ENCODE measurements at regions of chr2 and their contacts with region 1.

Region 1: DNA sequence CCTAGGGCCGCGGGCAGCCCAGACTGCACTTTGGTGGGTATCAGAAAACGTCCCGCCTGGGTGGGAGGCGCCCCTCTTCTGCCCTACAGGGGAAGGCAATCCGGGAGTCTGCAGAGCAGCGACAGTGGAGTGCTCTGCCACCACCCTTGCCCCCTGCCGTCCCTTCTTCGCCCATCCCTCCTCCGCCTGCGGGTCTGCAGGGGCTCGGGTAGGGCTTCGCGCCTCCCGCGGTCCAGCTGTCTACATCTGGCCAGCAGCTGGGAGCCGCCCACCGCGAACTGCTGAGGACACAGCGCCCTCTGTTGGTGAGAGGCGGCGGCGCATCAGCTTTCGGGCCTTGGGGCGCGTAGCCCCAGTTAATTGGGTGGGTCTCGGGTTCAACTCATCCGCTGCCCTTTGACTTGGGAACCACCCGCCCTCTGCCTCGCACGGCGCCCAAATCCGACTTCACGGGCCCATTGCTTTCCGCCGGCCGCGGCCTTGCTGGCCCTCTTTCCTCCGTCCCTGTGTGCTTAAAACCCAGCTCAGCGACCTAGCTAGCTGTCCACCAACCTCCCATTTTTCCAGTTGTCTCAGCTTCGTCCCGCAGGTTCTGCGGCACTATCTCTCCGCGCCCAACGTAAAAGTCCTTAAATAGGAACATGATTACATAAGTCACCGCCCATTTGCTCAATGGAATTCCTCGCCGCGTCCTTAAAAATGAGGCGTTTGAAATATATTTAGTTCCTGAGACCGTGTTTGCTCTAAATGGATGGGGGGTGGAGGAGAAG is 17.6 kb downstream of the WNT10A start:
- DNase-seq: peak; percentile 86
- ATAC-seq: peak; percentile 72

Region 2: DNA sequence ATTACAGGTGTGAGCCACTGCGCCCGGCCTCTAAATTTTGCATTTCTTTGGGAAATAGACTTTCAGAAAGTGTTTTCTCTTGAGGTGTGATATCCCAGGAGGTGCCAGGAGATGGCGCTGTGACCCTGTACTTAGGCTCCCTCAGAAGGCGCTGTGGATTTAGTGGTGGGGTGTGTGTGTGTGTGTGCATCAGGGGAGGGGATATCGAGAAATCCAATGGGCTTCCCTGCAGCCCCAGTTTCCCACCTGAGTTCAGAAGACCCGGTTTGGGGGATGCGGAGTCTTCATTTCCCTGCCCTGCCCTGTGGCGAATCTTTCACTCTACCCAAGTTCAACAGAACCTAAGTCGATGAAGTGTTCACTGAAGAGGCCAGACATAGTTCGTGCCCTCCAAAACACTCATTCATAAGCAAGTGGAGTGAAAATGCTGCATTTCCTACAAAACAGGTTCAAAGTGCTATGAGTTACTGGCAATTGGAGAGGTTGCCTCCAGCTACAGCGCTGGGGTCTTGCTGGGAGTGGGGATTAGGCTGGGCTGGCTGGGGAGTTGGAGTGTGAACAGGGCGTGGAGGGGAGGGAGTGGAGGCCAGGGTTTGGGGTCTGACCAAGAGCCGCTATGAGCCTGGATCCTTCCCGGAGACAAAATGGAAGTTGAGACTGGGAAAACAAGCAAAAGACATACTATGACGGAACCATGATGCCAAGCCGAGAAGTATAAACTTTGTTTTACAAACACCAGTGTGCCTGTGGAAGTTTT is 45.2 kb before region 1 on chr2:
- intact Hi-C with region 1: loop called (anchors 5 kb)
- DNase-seq: peak; percentile 76
- ATAC-seq: peak; percentile 51

Region 3: GRCh38 chr2:218876562-218877219 is 21.6 kb before region 1 on chr2:
- intact Hi-C with region 1: loop called (anchors 2 kb)
- DNase-seq: peak; percentile 62
- ATAC-seq: peak; percentile 40

Region 4: GRCh38 chr2:219206442-219207253 is 308.4 kb after region 1 on chr2 and contains the start of gene ZFAND2B:
- intact Hi-C with region 1: no loop called
- DNase-seq: peak; percentile 98
- ATAC-seq: peak; percentile 98
- total RNA-seq, gene ZFAND2B: 24.3 TPM

Measured in Right ventricle myocardium inferior (tissue), 1 donor.